Right cardiac atrium (tissue), 5 donors: ENCODE measurements at regions of chr16 and their contacts with region 1.

Region 1: DNA sequence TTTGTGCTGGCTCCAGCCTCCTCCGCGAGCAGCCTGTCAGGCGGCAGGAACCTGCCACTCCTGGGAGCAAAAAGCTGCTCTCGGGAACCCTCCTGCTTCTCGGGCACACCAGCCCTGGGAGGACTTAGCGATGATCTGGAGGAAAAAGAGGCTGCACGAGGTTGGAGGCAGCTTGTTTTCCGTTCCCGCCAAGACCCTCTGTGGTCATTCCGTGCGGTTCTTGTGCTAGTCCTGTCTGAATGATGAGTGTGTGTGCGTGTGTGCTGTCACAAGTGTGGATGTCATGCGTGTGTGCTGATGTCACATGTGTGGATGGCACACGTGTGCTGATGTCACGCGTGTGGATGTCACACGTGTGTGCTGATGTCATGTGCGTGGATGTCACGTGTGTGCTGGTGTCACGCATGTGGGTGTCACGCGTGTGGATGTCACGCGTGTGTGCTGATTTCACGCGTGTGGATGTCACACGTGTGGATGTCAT is 150.0 kb downstream of the NPIPB11 start:
- DNase-seq: peak in 1 of 3 donors; percentile 46
- ATAC-seq: no peak
- H3K4me3 ChIP-seq: no peak overlapping the region
- H3K27ac ChIP-seq: no peak overlapping the region
- H3K4me1 ChIP-seq: no peaks in the 10 kb centered on the region
- H3K27me3 ChIP-seq: no peaks in the 10 kb centered on the region

Region 2: GRCh38 chr16:29112755-29113347 is 143.7 kb before region 1 on chr16:
- intact Hi-C with region 1: loop called in 1 of 4 experiments (anchors 10 kb)
- DNase-seq: no peak
- ATAC-seq: no peak
- H3K4me3 ChIP-seq: no peak overlapping the region
- H3K27ac ChIP-seq: no peak overlapping the region
- H3K4me1 ChIP-seq: peaks cover 5% of the 10 kb centered on the region
- H3K27me3 ChIP-seq: no peaks in the 10 kb centered on the region

Region 3: GRCh38 chr16:29645694-29646187 is 389.2 kb after region 1 on chr16:
- intact Hi-C with region 1: no loop called
- DNase-seq: no peak
- ATAC-seq: no peak
- H3K4me3 ChIP-seq: no peak overlapping the region
- H3K27ac ChIP-seq: no peak overlapping the region
- H3K4me1 ChIP-seq: no peaks in the 10 kb centered on the region
- H3K27me3 ChIP-seq: no peaks in the 10 kb centered on the region